ENCODE measurements at regions of chr1 and their contacts with region 1.

Region 1: GRCh38 chr1:55618199-55618598 is 403.0 kb upstream of the USP24 start:
- DNase-seq: no peak
- H3K4me3 Mint-ChIP-seq: no peak overlapping the region
- H3K27ac Mint-ChIP-seq: no peak overlapping the region
- H3K4me1 Mint-ChIP-seq: no peaks in the 10 kb centered on the region
- H3K27me3 Mint-ChIP-seq: no peaks in the 10 kb centered on the region
- CTCF ChIP-seq: no peak

Region 2: DNA sequence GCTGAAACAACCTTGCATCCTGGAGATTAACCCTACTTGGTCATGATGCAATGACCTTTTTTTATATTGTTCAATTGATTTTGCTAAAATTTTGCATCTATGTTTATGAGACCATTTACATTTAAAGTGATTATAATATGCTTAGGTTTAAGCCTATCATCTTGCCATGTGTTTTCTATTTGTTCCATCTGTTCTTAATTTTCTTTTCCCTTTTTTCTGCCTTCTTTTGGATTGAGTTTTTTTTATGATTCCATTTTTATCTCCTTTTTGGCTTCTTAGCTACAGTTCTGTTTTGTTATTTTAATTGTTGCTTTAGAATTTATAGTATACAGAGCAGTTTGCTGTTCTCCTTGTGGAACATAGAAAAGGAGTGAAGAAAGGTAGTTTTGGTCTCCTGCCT is 18.0 kb before region 1 on chr1:
- CTCF ChIA-PET with region 1: interaction called, 5 read pairs
- POLR2A ChIA-PET with region 1: no interaction called
- intact Hi-C with region 1: loop called (anchors 1 kb)
- DNase-seq: no peak
- H3K4me3 Mint-ChIP-seq: no peak overlapping the region
- H3K27ac Mint-ChIP-seq: no peak overlapping the region
- H3K4me1 Mint-ChIP-seq: no peaks in the 10 kb centered on the region
- H3K27me3 Mint-ChIP-seq: no peaks in the 10 kb centered on the region
- CTCF ChIP-seq: no peak

Region 3: GRCh38 chr1:55650444-55650843 is 32.2 kb after region 1 on chr1:
- CTCF ChIA-PET with region 1: no interaction called
- POLR2A ChIA-PET with region 1: no interaction called
- intact Hi-C with region 1: no loop called
- DNase-seq: no peak
- H3K4me3 Mint-ChIP-seq: no peak overlapping the region
- H3K27ac Mint-ChIP-seq: no peak overlapping the region
- H3K4me1 Mint-ChIP-seq: peaks cover 5% of the 10 kb centered on the region
- H3K27me3 Mint-ChIP-seq: no peaks in the 10 kb centered on the region
- CTCF ChIP-seq: no peak

Region 4: GRCh38 chr1:56255516-56256152 is 637.4 kb after region 1 on chr1:
- CTCF ChIA-PET with region 1: no interaction called
- POLR2A ChIA-PET with region 1: no interaction called
- intact Hi-C with region 1: no loop called
- DNase-seq: peak; percentile 56
- H3K4me3 Mint-ChIP-seq: no peak overlapping the region
- H3K27ac Mint-ChIP-seq: no peak overlapping the region
- H3K4me1 Mint-ChIP-seq: peaks cover 10% of the 10 kb centered on the region
- H3K27me3 Mint-ChIP-seq: no peaks in the 10 kb centered on the region
- CTCF ChIP-seq: no peak